ENCODE measurements at regions of chr5 and their contacts with region 1.

Region 1: DNA sequence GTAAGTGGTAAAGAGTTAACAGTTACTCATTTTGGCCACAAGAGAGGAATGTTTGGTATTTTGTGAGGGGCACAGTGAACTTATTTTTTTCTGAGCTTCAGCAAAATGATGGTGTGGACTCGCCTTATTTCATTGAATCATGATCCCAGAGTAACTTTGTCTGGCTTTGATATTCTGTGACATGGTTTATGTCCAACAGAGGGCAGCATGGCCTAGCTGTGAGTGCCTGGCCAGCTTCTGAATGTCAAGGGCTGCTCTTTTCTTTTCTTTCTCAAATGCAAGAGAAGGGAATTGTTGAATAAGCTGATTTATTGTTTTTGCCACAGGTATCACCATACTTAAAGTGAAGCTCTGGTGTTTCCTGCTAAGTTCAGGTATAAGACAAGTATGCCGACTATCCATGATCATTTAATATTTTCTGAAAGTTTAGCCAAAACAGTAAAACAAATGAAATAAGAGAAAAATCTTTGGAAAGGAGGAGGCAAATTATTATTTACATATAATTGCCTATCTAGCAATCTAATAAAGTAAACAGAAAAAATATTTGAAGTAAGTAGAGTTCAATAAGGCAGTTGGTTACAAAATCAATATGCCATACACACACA is 31.7 kb downstream of the MRPL22 start:
- DNase-seq: no peak
- H3K4me3 ChIP-seq: no peak overlapping the region
- CTCF ChIP-seq: peak; percentile 56

Region 2: GRCh38 chr5:154583545-154584496 is 388.8 kb before region 1 on chr5:
- CTCF ChIA-PET with region 1: no interaction called
- POLR2A ChIA-PET with region 1: no interaction called
- DNase-seq: no peak
- H3K4me3 ChIP-seq: no peak overlapping the region
- CTCF ChIP-seq: no peak

Region 3: GRCh38 chr5:154962494-154962893 is 10.1 kb before region 1 on chr5:
- CTCF ChIA-PET with region 1: interaction called, 35 read pairs
- POLR2A ChIA-PET with region 1: no interaction called
- DNase-seq: no peak
- H3K4me3 ChIP-seq: no peak overlapping the region
- CTCF ChIP-seq: no peak

Region 4: GRCh38 chr5:154995679-154996078 is 23.1 kb after region 1 on chr5:
- CTCF ChIA-PET with region 1: interaction called, 13 read pairs
- POLR2A ChIA-PET with region 1: no interaction called
- DNase-seq: no peak
- H3K4me3 ChIP-seq: no peak overlapping the region
- CTCF ChIP-seq: no peak

Region 5: GRCh38 chr5:155056644-155057269 is 84.2 kb after region 1 on chr5:
- CTCF ChIA-PET with region 1: no interaction called
- POLR2A ChIA-PET with region 1: no interaction called
- DNase-seq: no peak
- H3K4me3 ChIP-seq: no peak overlapping the region
- CTCF ChIP-seq: no peak

Region 6: DNA sequence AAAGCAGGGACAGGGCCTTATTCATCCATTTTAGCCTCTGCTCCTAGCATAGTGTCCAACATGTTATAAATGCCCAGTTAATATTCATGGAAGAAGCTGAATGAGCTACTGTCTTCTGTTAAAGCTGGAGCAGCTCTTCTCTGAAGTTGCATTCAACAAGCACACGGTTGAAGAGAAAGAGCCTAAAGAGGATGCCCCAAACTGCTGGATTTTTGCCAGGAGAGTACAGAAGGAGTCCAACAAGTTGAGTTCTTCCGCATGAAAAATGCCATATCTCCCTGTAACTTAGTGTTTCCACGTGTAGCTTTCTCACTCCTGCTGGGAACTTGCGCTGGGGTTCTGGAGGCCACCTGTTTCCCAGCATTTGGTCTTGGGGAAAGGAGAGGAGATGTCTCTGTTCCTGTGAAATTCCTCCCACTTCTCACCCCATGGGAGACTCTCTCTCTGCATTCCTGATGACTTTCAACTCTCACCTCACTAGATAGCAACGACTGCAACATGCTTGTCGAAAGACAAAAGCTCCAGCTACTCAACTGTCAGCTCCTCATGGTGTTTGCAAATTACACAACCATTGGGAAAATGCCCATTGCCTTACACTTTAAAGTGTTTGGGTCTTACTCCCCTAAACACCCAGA is 163.8 kb after region 1 on chr5:
- CTCF ChIA-PET with region 1: interaction called, 56 read pairs
- POLR2A ChIA-PET with region 1: no interaction called
- DNase-seq: no peak
- H3K4me3 ChIP-seq: no peak overlapping the region
- CTCF ChIP-seq: no peak